Posterior vena cava (tissue), 2 donors: ENCODE measurements at regions of chr3 and their contacts with region 1.

Region 1: DNA sequence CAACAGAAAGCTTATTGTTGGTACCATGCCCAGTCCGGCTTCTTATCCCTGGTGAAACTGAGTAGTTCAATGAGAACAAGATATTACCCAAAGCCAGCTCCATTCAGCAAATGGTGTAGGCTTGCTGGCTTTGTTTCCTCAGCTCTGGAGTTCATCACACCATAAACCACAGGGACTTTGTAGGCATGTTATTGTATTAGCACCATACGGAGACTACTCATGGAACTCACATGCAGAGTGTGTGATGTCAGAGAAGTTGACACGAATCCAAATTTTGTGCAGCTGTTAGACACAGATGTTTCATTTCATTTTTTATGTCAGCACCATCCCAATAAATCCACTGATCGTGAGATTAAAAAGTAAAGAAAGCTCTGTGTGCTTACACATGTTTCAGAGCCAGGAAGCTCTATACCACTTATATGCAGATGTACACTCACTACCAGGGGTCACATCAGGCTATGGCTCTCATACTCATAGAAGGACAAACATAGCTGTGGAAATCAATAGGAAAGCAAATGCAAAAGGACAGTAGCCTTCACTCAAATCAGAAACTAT is 63.4 kb upstream of the LEKR1 start:
- DNase-seq: no peak

Region 2: GRCh38 chr3:156449712-156450574 is 312.8 kb before region 1 on chr3:
- intact Hi-C with region 1: no loop called
- DNase-seq: no peak

Region 3: GRCh38 chr3:156790156-156790555 is 27.4 kb after region 1 on chr3:
- intact Hi-C with region 1: loop called in 1 of 2 experiments (anchors 1 kb)
- DNase-seq: no peak

Region 4: DNA sequence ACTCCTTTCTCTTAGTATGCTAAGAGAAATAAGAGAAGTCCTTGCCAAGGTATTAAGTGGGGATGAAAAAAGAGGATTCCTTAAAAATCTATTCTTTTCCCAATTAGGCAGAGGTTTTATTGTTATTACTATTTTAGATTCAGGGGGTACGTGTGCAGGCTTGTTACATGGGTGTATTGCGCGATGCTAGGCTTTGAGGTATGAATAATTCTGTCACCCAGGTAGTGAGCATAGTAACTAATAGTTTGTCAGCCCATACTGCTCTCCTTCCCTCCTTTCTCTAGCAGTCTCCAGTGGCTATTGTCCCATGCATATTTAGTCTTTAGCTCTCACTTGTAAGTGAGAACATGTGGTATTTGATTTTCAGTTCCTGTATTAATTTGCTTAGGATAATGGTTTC is 147.3 kb after region 1 on chr3:
- intact Hi-C with region 1: no loop called
- DNase-seq: no peak